Calu3 (cell line): ENCODE measurements at regions of chr17 and their contacts with region 1.

Region 1: DNA sequence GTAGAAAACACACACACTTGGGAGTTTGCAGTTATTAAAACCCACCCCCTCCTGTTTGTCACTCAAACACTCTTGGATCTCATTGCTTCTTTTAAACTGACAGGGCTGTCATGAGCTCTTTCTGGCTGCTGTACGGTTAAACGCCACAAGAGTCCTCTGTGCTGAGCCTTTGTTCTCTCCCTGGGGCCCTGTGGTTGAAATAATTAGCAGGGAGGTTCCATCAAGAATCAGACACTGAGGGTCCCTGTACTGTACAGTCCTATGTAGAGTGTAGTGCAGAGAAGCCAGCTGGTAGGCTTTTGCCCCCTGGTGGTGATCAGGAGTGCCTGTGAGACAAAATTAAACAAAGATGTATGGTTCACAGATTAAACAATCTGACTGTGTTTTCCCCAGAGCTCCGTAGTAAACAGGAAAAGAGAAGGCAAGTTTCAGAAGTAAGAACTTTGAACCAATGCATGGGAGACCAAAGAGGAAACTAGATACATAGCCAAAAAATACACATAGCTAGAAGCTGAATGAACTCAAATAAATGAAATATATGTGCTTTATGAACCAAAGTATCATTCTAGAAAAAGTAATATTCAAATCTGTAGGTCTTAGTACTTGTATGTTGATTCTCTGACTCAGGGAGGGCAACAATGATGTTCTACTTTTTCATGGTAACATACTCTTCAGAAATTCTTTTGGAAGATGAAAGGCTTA is 1.4 kb upstream of the SSH2 start:
- DNase-seq: peak; percentile 68
- H3K4me3 Mint-ChIP-seq: no peak overlapping the region
- H3K27ac Mint-ChIP-seq: no peak overlapping the region
- H3K4me1 Mint-ChIP-seq: peaks cover 16% of the 10 kb centered on the region
- H3K27me3 Mint-ChIP-seq: no peaks in the 10 kb centered on the region
- CTCF ChIP-seq: peak; percentile 80

Region 2: GRCh38 chr17:29640413-29640812 is 291.0 kb before region 1 on chr17:
- CTCF ChIA-PET with region 1: interaction called, 31 read pairs
- intact Hi-C with region 1: loop called (anchors 1 kb)
- DNase-seq: no peak
- H3K4me3 Mint-ChIP-seq: no peak overlapping the region
- H3K27ac Mint-ChIP-seq: no peak overlapping the region
- H3K4me1 Mint-ChIP-seq: peaks cover 18% of the 10 kb centered on the region
- H3K27me3 Mint-ChIP-seq: no peaks in the 10 kb centered on the region
- CTCF ChIP-seq: no peak

Region 3: GRCh38 chr17:29807520-29808351 is 123.6 kb before region 1 on chr17:
- CTCF ChIA-PET with region 1: interaction called, 62 read pairs
- intact Hi-C with region 1: loop called (anchors 1 kb)
- DNase-seq: peak; percentile 81
- H3K4me3 Mint-ChIP-seq: no peak overlapping the region
- H3K27ac Mint-ChIP-seq: no peak overlapping the region
- H3K4me1 Mint-ChIP-seq: no peaks in the 10 kb centered on the region
- H3K27me3 Mint-ChIP-seq: no peaks in the 10 kb centered on the region
- CTCF ChIP-seq: peak; percentile 47

Region 4: GRCh38 chr17:29867643-29868181 is 63.7 kb before region 1 on chr17:
- CTCF ChIA-PET with region 1: interaction called, 26 read pairs
- intact Hi-C with region 1: loop called (anchors 1 kb)
- DNase-seq: no peak
- H3K4me3 Mint-ChIP-seq: no peak overlapping the region
- H3K27ac Mint-ChIP-seq: no peak overlapping the region
- H3K4me1 Mint-ChIP-seq: no peaks in the 10 kb centered on the region
- H3K27me3 Mint-ChIP-seq: no peaks in the 10 kb centered on the region
- CTCF ChIP-seq: no peak

Region 5: GRCh38 chr17:29918922-29919856 is 12.2 kb before region 1 on chr17:
- CTCF ChIA-PET with region 1: no interaction called
- intact Hi-C with region 1: no loop called
- DNase-seq: no peak
- H3K4me3 Mint-ChIP-seq: no peak overlapping the region
- H3K27ac Mint-ChIP-seq: peak overlapping the region; percentile 17
- H3K4me1 Mint-ChIP-seq: peaks cover 12% of the 10 kb centered on the region
- H3K27me3 Mint-ChIP-seq: no peaks in the 10 kb centered on the region
- CTCF ChIP-seq: no peak

Region 6: GRCh38 chr17:29972277-29972676 is 40.9 kb after region 1 on chr17:
- CTCF ChIA-PET with region 1: no interaction called
- intact Hi-C with region 1: no loop called
- DNase-seq: no peak
- H3K4me3 Mint-ChIP-seq: no peak overlapping the region
- H3K27ac Mint-ChIP-seq: no peak overlapping the region
- H3K4me1 Mint-ChIP-seq: no peaks in the 10 kb centered on the region
- H3K27me3 Mint-ChIP-seq: no peaks in the 10 kb centered on the region
- CTCF ChIP-seq: no peak

Region 7: GRCh38 chr17:30021708-30022317 is 90.4 kb after region 1 on chr17:
- CTCF ChIA-PET with region 1: interaction called, 4 read pairs
- intact Hi-C with region 1: loop called (anchors 1 kb)
- DNase-seq: peak; percentile 41
- H3K4me3 Mint-ChIP-seq: no peak overlapping the region
- H3K27ac Mint-ChIP-seq: no peak overlapping the region
- H3K4me1 Mint-ChIP-seq: no peaks in the 10 kb centered on the region
- H3K27me3 Mint-ChIP-seq: no peaks in the 10 kb centered on the region
- CTCF ChIP-seq: peak; percentile 38

Region 8: GRCh38 chr17:30074730-30075129 is 143.3 kb after region 1 on chr17:
- CTCF ChIA-PET with region 1: no interaction called
- intact Hi-C with region 1: no loop called
- DNase-seq: no peak
- H3K4me3 Mint-ChIP-seq: no peak overlapping the region
- H3K27ac Mint-ChIP-seq: no peak overlapping the region
- H3K4me1 Mint-ChIP-seq: no peaks in the 10 kb centered on the region
- H3K27me3 Mint-ChIP-seq: peaks cover 64% of the 10 kb centered on the region
- CTCF ChIP-seq: no peak